Dorsolateral prefrontal cortex (tissue), 120 donors: ENCODE measurements at regions of chr9 and their contacts with region 1.

Region 1: DNA sequence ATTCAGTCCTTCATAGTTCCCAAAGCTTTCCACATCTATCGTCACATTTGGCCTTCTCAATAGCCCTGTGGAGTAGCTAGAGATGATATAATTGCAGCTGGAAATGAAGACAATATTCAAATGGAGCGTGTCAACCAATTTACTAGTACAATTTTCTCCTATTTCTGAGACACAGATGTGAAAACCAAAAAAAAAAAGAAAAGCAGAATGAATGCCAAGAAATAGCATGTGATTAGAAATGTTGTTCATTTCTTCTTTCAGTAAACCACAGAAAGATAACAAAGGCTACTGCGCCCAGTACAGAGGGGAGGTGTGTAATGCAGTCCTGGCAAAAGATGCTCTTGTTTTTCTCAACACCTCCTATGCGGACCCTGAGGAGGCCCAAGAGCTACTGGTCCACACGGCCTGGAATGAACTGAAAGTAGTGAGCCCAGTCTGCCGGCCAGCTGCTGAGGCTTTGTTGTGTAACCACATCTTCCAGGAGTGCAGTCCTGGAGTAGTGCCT is 99.0 kb downstream of the MUSK start:
- DNase-seq: peak in 6 of 10 donors; percentile 31 to 54 (median 40)
- H3K4me3 ChIP-seq: peak overlapping the region in 25 of 59 donors; percentile 0 to 45 (median 22)
- H3K27ac ChIP-seq: peak overlapping the region; percentile 28 to 96 (median 89)
- H3K27me3 ChIP-seq: no peaks in the 10 kb centered on the region
- CTCF ChIP-seq: peak in 4 of 56 donors; percentile 3 to 11 (median 8)

Region 2: GRCh38 chr9:110700953-110701352 is 66.7 kb before region 1 on chr9:
- intact Hi-C with region 1: no loop called
- DNase-seq: no peak
- H3K4me3 ChIP-seq: no peak overlapping the region
- H3K27ac ChIP-seq: no peak overlapping the region
- H3K27me3 ChIP-seq: no peaks in the 10 kb centered on the region
- CTCF ChIP-seq: no peak

Region 3: DNA sequence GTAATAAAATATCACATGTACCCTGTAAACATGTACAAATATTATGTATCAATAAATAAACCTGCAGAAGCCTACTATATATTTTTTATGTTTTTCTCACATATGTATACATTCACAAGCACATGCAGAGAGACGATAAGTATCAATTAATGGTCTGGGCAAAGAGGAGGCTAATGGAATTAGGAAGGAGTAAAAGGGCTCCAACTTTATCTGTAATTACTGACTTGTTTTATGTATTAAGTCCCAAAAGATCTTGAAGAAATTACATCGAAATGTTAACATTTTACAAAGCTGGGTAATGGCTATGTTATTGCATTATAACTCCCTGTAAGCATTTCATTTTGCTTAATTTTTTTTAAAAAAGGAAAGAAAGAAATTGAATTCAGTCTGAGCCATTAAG is 192.7 kb after region 1 on chr9:
- intact Hi-C with region 1: loop called in 1 of 2 experiments (anchors 5 kb)
- DNase-seq: no peak
- H3K4me3 ChIP-seq: no peak overlapping the region
- H3K27ac ChIP-seq: peak overlapping the region in 15 of 59 donors; percentile 3 to 58 (median 27)
- H3K27me3 ChIP-seq: no peaks in the 10 kb centered on the region
- CTCF ChIP-seq: no peak